B cell (primary cell): ENCODE measurements at regions of chr3 and their contacts with region 1.

Region 1: GRCh38 chr3:39180546-39181346 is 11.6 kb downstream of the XIRP1 start:
- DNase-seq: peak; percentile 95
- ATAC-seq: peak; percentile 85
- H3K4me3 ChIP-seq: peak overlapping the region; percentile 6 to 51 (median 37)
- H3K4me3 Mint-ChIP-seq: peak overlapping the region; percentile 82
- H3K27ac ChIP-seq: peak overlapping the region; percentile 9 to 47
- H3K27ac Mint-ChIP-seq: peak overlapping the region; percentile 72
- H3K4me1 ChIP-seq: peaks cover 23 to 35% of the 10 kb centered on the region in 2 donors
- H3K4me1 Mint-ChIP-seq: peaks cover 32% of the 10 kb centered on the region
- H3K27me3 ChIP-seq: no peaks in the 10 kb centered on the region
- H3K27me3 Mint-ChIP-seq: no peaks in the 10 kb centered on the region
- CTCF ChIP-seq: no peak

Region 2: GRCh38 chr3:39101022-39101689 is 79.6 kb before region 1 on chr3:
- CTCF ChIA-PET with region 1: interaction called, 10 read pairs
- POLR2A ChIA-PET with region 1: no interaction called
- intact Hi-C with region 1: loop called (anchors 1 kb)
- DNase-seq: peak; percentile 71
- ATAC-seq: peak; percentile 85
- H3K4me3 ChIP-seq: no peak overlapping the region
- H3K4me3 Mint-ChIP-seq: no peak overlapping the region
- H3K27ac ChIP-seq: peak overlapping the region in 1 of 2 donors; percentile 9
- H3K27ac Mint-ChIP-seq: peak overlapping the region; percentile 71
- H3K4me1 ChIP-seq: peaks cover 11 to 31% of the 10 kb centered on the region in 2 donors
- H3K4me1 Mint-ChIP-seq: peaks cover 46% of the 10 kb centered on the region
- H3K27me3 ChIP-seq: no peaks in the 10 kb centered on the region
- H3K27me3 Mint-ChIP-seq: no peaks in the 10 kb centered on the region
- CTCF ChIP-seq: peak; percentile 71

Region 3: GRCh38 chr3:39383045-39383880 is 202.5 kb after region 1 on chr3 and contains the start of gene SLC25A38:
- CTCF ChIA-PET with region 1: no interaction called
- POLR2A ChIA-PET with region 1: no interaction called
- intact Hi-C with region 1: loop called (anchors 2 kb)
- DNase-seq: peak; percentile 93
- ATAC-seq: peak; percentile 71
- H3K4me3 ChIP-seq: peak within 1 kb of the TSS; percentile 4 to 91 (median 83)
- H3K4me3 Mint-ChIP-seq: peak within 1 kb of the TSS; percentile 98
- H3K27ac ChIP-seq: peak within 1 kb of the TSS; percentile 94 to 96
- H3K27ac Mint-ChIP-seq: peak within 1 kb of the TSS; percentile 99
- H3K4me1 ChIP-seq: peaks cover 43 to 50% of the 10 kb centered on the region in 2 donors
- H3K4me1 Mint-ChIP-seq: peaks cover 42% of the 10 kb centered on the region
- H3K27me3 ChIP-seq: no peaks in the 10 kb centered on the region
- H3K27me3 Mint-ChIP-seq: no peaks in the 10 kb centered on the region
- CTCF ChIP-seq: peak; percentile 60
- total RNA-seq, gene SLC25A38: 46.3 and 53.0 TPM in 2 replicates

Region 4: DNA sequence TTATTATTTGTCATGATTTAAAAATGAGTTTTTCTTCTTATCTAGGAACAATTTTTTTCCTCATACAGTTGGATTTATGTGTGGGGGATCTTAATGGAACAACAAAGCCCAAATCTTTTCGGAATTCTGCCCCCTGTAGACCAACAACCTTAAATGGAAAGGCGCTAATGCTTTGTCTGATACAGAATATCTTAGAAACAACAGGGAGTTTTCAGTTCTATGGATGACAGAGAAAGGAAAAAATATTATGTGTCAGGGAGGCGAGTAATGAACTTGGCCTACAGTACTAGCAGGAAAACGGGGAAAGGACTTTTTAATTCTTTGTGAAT is 287.3 kb after region 1 on chr3:
- CTCF ChIA-PET with region 1: no interaction called
- POLR2A ChIA-PET with region 1: no interaction called
- intact Hi-C with region 1: no loop called
- DNase-seq: no peak
- ATAC-seq: no peak
- H3K4me3 ChIP-seq: no peak overlapping the region
- H3K4me3 Mint-ChIP-seq: no peak overlapping the region
- H3K27ac ChIP-seq: no peak overlapping the region
- H3K27ac Mint-ChIP-seq: no peak overlapping the region
- H3K4me1 ChIP-seq: no peaks in the 10 kb centered on the region
- H3K4me1 Mint-ChIP-seq: no peaks in the 10 kb centered on the region
- H3K27me3 ChIP-seq: no peaks in the 10 kb centered on the region
- H3K27me3 Mint-ChIP-seq: peaks cover 22% of the 10 kb centered on the region
- CTCF ChIP-seq: no peak

Region 5: DNA sequence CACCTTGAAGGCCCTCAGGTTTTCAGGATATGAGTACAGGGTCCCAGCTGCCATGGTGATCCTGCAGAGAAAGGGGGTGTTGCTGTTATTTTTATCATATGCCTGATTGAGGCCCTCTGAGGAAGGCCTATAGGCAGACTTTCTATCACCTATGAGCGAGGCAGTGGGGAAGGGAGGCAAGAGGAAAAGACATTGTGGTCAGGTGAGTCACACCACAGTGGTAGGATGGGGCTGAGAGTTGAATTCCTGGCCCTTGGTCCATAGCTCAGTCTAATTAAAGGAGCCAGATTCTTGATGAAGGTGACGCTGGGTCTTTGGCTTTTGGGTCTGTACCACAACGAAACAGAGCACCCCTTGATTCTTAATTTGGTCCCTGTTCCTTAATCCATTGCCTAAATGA is 1416.7 kb after region 1 on chr3:
- CTCF ChIA-PET with region 1: no interaction called
- POLR2A ChIA-PET with region 1: no interaction called
- intact Hi-C with region 1: no loop called
- DNase-seq: no peak
- ATAC-seq: no peak
- H3K4me3 ChIP-seq: no peak overlapping the region
- H3K4me3 Mint-ChIP-seq: no peak overlapping the region
- H3K27ac ChIP-seq: no peak overlapping the region
- H3K27ac Mint-ChIP-seq: no peak overlapping the region
- H3K4me1 ChIP-seq: no peaks in the 10 kb centered on the region
- H3K4me1 Mint-ChIP-seq: no peaks in the 10 kb centered on the region
- H3K27me3 ChIP-seq: peaks cover 0 to 4% (median 0%) of the 10 kb centered on the region in 4 experiments
- H3K27me3 Mint-ChIP-seq: peaks cover 38% of the 10 kb centered on the region
- CTCF ChIP-seq: no peak